ENCODE measurements at regions of chr13 and their contacts with region 1.

Region 1: GRCh38 chr13:65677906-65678305 is 1552.2 kb downstream of the PCDH9 start:
- DNase-seq: no peak
- ATAC-seq: no peak
- H3K4me3 Mint-ChIP-seq: no peak overlapping the region
- H3K27ac Mint-ChIP-seq: no peak overlapping the region
- H3K4me1 Mint-ChIP-seq: no peaks in the 10 kb centered on the region
- H3K27me3 Mint-ChIP-seq: no peaks in the 10 kb centered on the region
- CTCF ChIP-seq: no peak

Region 2: DNA sequence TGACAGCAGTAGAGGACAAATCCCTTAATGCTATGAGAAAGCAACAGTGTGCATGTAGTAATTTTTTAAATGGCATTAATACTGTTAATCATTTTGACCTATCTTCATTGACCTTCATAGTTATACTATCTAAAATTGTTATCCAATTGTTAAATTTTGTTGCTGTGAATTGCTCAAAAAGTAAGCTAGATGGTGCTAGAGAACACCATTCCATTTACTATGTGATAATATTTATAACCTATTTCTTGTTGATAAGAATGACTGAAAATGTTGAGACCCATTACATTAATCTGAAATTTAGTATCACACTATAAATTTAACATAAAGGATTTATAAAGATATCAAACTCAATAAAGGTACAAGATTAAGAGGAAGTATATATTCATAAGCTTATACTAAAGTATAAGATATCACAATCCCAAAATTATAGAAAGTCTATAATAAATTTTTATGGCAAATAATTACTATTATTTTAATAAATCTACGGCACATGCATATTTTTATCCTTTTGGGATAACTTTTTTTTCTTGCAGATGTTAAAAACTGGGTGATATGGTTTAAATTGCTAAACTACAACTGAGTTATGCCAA is 21.1 kb before region 1 on chr13:
- CTCF ChIA-PET with region 1: no interaction called
- POLR2A ChIA-PET with region 1: no interaction called
- intact Hi-C with region 1: no loop called
- DNase-seq: no peak
- ATAC-seq: no peak
- H3K4me3 Mint-ChIP-seq: no peak overlapping the region
- H3K27ac Mint-ChIP-seq: no peak overlapping the region
- H3K4me1 Mint-ChIP-seq: no peaks in the 10 kb centered on the region
- H3K27me3 Mint-ChIP-seq: no peaks in the 10 kb centered on the region
- CTCF ChIP-seq: no peak

Region 3: DNA sequence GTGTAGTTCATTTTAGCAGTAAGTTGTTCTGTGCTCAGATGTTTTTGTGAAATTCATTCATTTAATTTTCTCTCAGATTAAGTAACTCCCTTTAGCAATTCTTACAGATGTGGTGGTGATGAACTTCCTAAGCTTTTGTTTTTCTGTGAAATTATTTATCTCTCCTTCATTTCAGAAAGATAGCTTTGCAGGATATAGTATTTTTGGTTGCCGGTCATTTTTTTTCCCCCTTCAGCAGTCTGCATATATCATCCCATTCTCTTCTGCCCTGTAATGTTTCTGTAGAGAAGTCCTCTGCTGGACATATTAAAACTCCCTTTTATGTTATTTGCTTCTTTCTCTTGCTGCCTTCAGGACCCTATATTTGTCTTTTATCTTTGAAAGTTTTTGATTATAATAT is 1082.0 kb after region 1 on chr13:
- CTCF ChIA-PET with region 1: no interaction called
- POLR2A ChIA-PET with region 1: no interaction called
- intact Hi-C with region 1: loop called (anchors 5 kb)
- DNase-seq: no peak
- ATAC-seq: no peak
- H3K4me3 Mint-ChIP-seq: no peak overlapping the region
- H3K27ac Mint-ChIP-seq: no peak overlapping the region
- H3K4me1 Mint-ChIP-seq: no peaks in the 10 kb centered on the region
- H3K27me3 Mint-ChIP-seq: no peaks in the 10 kb centered on the region
- CTCF ChIP-seq: no peak

Measured in activated B cell treated with CpG ODN at 0.5 μM for 24 hours (primary cell).